ENCODE measurements at regions of chr5 and their contacts with region 1.

Region 1: DNA sequence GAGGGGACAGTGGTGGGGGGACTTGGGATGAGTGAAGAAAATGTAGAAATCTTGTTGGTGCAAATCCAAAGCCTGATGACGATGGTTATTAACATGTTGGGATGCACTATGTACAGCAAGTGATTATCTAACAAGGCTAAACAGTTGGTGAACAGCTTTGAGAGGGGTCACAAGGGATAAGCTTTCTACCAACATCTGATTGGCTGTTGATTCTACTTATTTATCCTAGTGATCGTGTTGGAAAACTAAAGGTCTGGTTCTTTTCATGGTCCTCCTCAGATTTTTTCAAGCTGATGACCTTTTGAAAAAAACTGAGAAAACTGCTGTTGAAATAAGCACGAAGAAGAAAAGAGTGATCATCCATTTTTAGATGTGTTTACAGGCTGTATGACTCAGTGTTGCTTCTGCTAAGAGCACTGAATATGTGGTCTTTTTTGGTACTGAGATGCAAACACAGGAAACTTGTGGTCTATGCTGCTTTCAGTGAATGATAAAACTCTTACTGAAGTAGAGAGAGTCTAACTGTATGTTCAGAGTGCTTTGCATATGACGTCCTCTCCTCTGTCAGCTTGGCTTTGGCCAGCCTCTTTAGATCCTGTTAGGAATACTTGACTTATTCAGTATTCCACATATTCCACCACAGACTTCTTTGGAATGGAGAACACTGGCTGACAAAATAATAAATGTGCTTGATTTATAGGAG is 174.8 kb downstream of the SLF1 start:
- DNase-seq: no peak
- ATAC-seq: peak; percentile 96
- H3K4me3 Mint-ChIP-seq: peak overlapping the region; percentile 24
- H3K27ac Mint-ChIP-seq: peak overlapping the region; percentile 54
- H3K4me1 Mint-ChIP-seq: peaks cover 24% of the 10 kb centered on the region
- H3K27me3 Mint-ChIP-seq: no peaks in the 10 kb centered on the region
- CTCF ChIP-seq: no peak

Region 2: GRCh38 chr5:94745786-94746730 is 47.2 kb before region 1 on chr5:
- CTCF ChIA-PET with region 1: no interaction called
- POLR2A ChIA-PET with region 1: interaction called, 7 read pairs
- intact Hi-C with region 1: loop called (anchors 1 kb)
- DNase-seq: no peak
- ATAC-seq: peak; percentile 72
- H3K4me3 Mint-ChIP-seq: peak overlapping the region; percentile 57
- H3K27ac Mint-ChIP-seq: peak overlapping the region; percentile 83
- H3K4me1 Mint-ChIP-seq: peaks cover 42% of the 10 kb centered on the region
- H3K27me3 Mint-ChIP-seq: no peaks in the 10 kb centered on the region
- CTCF ChIP-seq: no peak